Activated naive CD4-positive, alpha-beta T cell treated with anti-CD3 and anti-CD28 coated beads for 36 hours (primary cell): ENCODE measurements at regions of chr10 and their contacts with region 1.

Region 1: DNA sequence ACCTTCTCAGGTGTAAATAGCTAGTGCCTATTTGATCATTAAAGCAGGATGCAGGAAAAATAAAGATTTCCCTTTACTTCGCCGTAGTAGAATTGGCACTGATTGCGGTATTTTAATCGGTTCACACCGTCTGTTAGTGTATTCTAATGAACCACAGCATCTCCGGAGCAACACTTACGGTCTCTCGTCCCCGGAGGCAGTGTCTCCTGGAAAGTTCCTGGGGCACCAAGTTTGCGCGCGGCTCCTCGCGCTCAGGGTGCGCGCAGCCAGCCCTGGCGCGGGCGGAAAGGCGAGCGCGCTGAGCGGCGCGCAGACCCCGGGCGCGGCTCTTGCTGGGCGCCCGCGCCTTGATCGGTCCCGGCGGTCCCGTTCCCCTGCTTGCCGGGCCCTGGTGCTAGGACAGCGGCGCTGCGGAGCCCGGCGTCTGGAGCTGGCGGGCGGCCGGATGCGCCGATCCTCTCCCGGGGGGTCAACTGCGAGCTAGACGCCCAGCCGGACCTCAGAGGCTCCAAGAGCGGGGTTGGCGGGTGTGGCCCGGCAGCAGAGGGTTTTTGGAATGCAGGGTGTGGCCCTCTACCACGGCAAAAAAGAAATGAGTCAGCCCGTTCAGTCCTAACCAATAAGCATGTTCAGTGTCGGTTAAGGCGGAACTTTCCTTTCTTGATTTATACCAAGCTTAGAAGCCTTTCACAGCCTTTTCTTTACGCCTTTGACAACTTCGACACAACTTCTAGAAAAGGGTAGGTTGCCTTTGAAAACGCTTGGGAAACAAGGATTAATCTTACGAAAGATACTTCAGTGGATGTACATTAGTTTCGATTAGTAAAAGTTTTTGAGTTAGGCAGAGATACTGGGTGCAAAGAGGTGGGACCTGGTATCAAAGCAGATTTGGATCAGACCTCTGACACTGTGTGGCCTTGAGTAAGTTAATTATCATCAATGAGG is 166.8 kb upstream of the ASAH2 start:
- DNase-seq: peak; percentile 58
- H3K4me3 Mint-ChIP-seq: peak overlapping the region; percentile 81
- H3K27ac Mint-ChIP-seq: no peak overlapping the region
- H3K4me1 Mint-ChIP-seq: peaks cover 23% of the 10 kb centered on the region
- H3K27me3 Mint-ChIP-seq: no peaks in the 10 kb centered on the region

Region 2: DNA sequence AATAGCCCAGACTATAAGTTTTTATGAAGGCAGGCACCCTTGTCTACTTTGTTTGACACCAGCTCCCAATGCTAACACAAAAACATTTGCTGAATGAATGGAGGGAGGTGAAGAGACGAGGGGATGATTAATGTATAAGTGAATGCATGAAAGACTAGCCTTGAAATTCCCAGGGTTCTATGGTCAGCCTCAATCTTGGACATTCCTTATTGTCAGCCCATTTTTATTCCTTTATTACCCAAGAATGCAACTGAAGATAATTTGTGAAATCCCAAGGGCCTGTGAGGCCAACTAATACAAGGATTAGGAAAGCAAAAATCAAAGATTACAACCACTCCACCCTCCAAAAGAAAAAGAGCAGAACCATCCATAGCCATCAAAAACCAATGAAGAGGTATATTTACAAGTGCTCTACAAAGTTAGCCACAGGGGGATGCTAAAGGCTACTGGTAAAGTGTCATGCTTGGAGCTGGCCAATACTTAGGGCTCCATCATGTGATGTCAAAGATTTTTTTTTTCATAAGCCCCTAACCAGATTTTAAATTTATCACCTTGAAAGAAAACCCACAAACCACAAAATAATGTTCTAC is 126.8 kb before region 1 on chr10:
- CTCF ChIA-PET with region 1: no interaction called
- intact Hi-C with region 1: loop called (anchors 5 kb)
- DNase-seq: no peak
- H3K4me3 Mint-ChIP-seq: no peak overlapping the region
- H3K27ac Mint-ChIP-seq: no peak overlapping the region
- H3K4me1 Mint-ChIP-seq: no peaks in the 10 kb centered on the region
- H3K27me3 Mint-ChIP-seq: no peaks in the 10 kb centered on the region

Region 3: DNA sequence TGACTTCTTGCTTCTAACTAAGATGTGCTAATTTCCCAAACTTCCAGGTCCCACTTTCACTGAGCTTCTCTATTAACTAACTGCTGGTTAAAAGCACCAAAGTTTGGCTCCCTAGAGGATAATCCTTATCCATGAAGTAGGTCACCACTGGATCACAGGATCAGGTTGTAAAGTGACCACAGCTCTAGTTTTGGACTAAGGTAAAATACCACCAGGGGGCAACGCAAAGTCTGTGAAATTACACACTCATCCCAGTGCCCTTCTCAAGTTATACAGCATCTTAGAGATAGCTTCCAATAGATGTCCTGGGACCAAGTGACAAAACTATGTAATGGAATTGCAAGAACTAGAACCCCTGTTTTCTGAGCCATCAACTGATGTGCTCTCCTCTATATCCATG is 50.4 kb before region 1 on chr10:
- CTCF ChIA-PET with region 1: interaction called, 6 read pairs
- intact Hi-C with region 1: loop called (anchors 1 kb)
- DNase-seq: peak; percentile 19
- H3K4me3 Mint-ChIP-seq: no peak overlapping the region
- H3K27ac Mint-ChIP-seq: no peak overlapping the region
- H3K4me1 Mint-ChIP-seq: peaks cover 2% of the 10 kb centered on the region
- H3K27me3 Mint-ChIP-seq: no peaks in the 10 kb centered on the region